SK-N-SH (cell line): ENCODE measurements at regions of chr7 and their contacts with region 1.

Region 1: GRCh38 chr7:97027427-97028234 is 3.0 kb upstream of the DLX5 start:
- DNase-seq: peak; percentile 89
- H3K4me3 ChIP-seq: peak overlapping the region; percentile 16 to 38; a peak in 3 of 4 replicates
- H3K27ac ChIP-seq: no peak overlapping the region
- H3K4me1 ChIP-seq: peaks cover 0 to 12% of the 10 kb centered on the region in 2 experiments; a peak in 1 of 4 replicates
- H3K27me3 ChIP-seq: peaks cover 22% of the 10 kb centered on the region
- CTCF ChIP-seq: peak; percentile 99
- EP300 ChIP-seq: no peak
- RAD21 ChIP-seq: peak; percentile 100

Region 2: GRCh38 chr7:95916573-95917297 is 1110.9 kb before region 1 on chr7:
- CTCF ChIA-PET with region 1: interaction called, 156 read pairs
- POLR2A ChIA-PET with region 1: no interaction called
- DNase-seq: peak; percentile 57
- H3K4me3 ChIP-seq: peak overlapping the region; percentile 6 to 14; a peak in 2 of 4 replicates
- H3K27ac ChIP-seq: no peak overlapping the region
- H3K4me1 ChIP-seq: no peaks in the 10 kb centered on the region
- H3K27me3 ChIP-seq: no peaks in the 10 kb centered on the region
- CTCF ChIP-seq: peak; percentile 100
- EP300 ChIP-seq: no peak
- RAD21 ChIP-seq: peak; percentile 99

Region 3: DNA sequence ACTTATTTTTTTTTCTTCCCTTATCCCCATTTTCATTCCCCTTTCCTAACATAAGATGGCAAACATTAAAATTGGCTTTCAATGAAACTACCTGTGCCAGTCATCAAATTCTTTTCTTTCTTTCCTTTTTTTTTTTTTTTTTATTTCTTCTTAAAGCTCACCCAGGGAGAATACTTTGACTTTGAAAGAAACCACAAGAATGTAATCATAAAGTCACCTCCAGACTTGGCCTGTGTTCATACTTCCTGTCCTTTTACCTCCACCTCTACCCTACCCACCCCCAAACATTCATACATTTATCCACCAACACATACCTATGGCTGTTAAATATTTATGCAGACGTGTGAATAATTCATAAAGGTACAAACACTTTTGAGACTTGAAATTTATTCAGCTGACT is 960.3 kb before region 1 on chr7:
- CTCF ChIA-PET with region 1: interaction called, 20 read pairs
- POLR2A ChIA-PET with region 1: no interaction called
- DNase-seq: no peak
- H3K4me3 ChIP-seq: no peak overlapping the region
- H3K27ac ChIP-seq: no peak overlapping the region
- H3K4me1 ChIP-seq: peaks cover 0 to 2% of the 10 kb centered on the region in 2 experiments; a peak in 1 of 4 replicates
- H3K27me3 ChIP-seq: peaks cover 17% of the 10 kb centered on the region; the same call in 1 of the 2 replicates
- CTCF ChIP-seq: no peak
- EP300 ChIP-seq: no peak
- RAD21 ChIP-seq: no peak

Region 4: GRCh38 chr7:96179837-96180236 is 847.8 kb before region 1 on chr7:
- CTCF ChIA-PET with region 1: interaction called, 17 read pairs
- POLR2A ChIA-PET with region 1: interaction called, 3 read pairs
- DNase-seq: no peak
- H3K4me3 ChIP-seq: no peak overlapping the region
- H3K27ac ChIP-seq: no peak overlapping the region
- H3K4me1 ChIP-seq: peaks cover 0 to 4% of the 10 kb centered on the region in 2 experiments; a peak in 2 of 4 replicates
- H3K27me3 ChIP-seq: no peaks in the 10 kb centered on the region
- CTCF ChIP-seq: peak; percentile 39
- EP300 ChIP-seq: no peak
- RAD21 ChIP-seq: peak; percentile 55

Region 5: DNA sequence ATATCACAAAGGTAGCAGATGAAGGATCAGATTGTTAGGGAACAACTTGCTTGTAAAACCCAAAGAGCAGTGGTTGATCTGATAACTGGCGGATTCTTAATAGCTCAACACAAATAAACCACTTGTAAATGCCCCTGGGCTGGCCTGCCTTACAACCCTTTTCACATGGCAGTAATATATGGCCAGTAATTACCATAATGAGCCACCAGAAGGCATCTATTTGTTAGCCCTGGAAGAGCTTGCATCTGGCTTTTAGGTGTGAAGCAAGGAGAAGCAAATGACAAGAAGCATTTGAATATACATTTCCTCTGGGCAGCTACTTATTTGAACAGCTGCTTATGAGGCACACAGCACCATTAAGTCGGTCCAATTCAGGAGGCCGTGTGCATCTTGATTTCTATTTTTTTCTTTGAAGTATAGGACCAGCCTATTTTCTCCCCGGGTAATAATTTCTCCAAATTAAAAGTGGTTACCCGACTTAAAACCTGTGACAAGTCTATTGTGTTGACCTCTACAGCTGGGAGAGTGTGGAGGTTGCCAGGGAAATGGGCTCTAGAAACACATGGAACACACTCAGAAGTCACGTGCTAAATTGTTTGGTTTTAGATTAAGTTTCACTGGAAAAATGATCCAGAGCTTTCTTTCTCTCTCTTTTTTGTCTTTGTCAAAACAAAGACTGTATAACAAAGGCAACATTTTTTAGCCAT is 431.4 kb before region 1 on chr7:
- CTCF ChIA-PET with region 1: interaction called, 24 read pairs
- POLR2A ChIA-PET with region 1: no interaction called
- DNase-seq: peak; percentile 50
- H3K4me3 ChIP-seq: no peak overlapping the region
- H3K27ac ChIP-seq: no peak overlapping the region
- H3K4me1 ChIP-seq: peaks cover 0 to 9% of the 10 kb centered on the region in 2 experiments; a peak in 2 of 4 replicates
- H3K27me3 ChIP-seq: no peaks in the 10 kb centered on the region
- CTCF ChIP-seq: peak; percentile 26
- EP300 ChIP-seq: peak in 1 of 2 experiments; percentile 33; a peak in 1 of 4 replicates
- RAD21 ChIP-seq: peak; percentile 46

Region 6: GRCh38 chr7:96982586-96982985 is 45.0 kb before region 1 on chr7:
- CTCF ChIA-PET with region 1: no interaction called
- POLR2A ChIA-PET with region 1: no interaction called
- DNase-seq: no peak
- H3K4me3 ChIP-seq: no peak overlapping the region
- H3K27ac ChIP-seq: no peak overlapping the region
- H3K4me1 ChIP-seq: no peaks in the 10 kb centered on the region
- H3K27me3 ChIP-seq: no peaks in the 10 kb centered on the region
- CTCF ChIP-seq: no peak
- EP300 ChIP-seq: no peak
- RAD21 ChIP-seq: no peak

Region 7: DNA sequence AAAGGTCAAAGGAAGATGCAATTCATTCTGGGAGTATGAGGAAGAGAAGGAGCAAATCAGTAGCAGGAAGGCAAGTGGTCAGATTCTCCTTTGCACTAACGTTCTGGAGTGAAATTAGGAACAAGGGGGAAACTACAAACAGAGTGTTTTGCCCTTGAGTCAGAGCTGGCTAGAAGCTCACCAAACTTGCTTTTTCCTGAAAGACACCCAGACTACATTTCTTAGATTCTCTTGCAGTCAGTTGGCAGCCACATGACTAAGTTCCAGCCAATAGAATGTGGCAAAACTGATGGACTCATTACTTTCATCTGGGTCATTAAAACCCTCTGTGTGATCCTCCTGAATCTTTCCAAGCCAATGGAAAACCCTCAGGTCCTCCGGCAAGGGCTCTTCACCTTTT is 15.7 kb after region 1 on chr7:
- CTCF ChIA-PET with region 1: interaction called, 27 read pairs
- POLR2A ChIA-PET with region 1: no interaction called
- DNase-seq: no peak
- H3K4me3 ChIP-seq: no peak overlapping the region
- H3K27ac ChIP-seq: no peak overlapping the region
- H3K4me1 ChIP-seq: no peaks in the 10 kb centered on the region
- H3K27me3 ChIP-seq: no peaks in the 10 kb centered on the region
- CTCF ChIP-seq: no peak
- EP300 ChIP-seq: no peak
- RAD21 ChIP-seq: no peak